ENCODE measurements at regions of chr19 and their contacts with region 1.

Region 1: DNA sequence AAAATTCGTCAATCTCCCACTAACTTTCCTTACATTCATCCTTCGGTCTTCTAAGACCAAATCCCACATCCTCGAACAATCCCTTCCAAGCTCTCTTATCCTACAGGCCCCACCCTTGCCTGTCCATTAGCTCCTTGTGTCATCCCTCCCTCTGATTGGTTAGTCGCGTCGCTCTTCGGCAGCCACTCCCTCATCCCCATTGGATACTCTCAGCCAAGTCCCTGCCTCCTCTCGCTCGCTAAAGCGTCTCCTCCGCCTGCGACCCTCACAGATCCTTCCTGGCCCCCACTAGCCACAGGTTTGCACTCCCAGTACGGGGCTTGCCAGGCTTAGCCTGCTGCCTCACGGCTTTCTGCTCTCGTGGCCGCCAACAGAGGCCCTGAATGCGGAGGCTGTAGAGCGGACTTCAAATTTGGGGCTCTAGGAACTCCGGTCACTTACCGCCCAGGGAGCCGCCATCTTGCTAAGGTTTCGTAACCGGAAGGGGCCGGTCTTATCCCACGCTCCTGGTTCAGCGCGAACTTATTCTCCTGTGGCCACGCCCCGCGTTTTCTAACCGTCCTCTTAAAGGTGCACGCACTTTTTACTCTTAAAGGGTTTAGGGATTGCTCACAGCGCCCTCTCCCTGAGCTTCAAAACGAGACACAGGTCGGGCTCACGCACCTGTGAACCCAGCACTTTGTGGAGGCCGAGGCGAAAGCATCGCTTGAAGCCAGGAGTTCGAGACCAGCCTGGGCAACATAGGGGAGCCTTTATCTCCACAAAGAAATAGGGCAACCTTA is at the start of gene DMAC2:
- DNase-seq: peak; percentile 87 to 97 (median 92)
- H3K4me3 ChIP-seq: peak within 1 kb of the TSS; percentile 80 to 93
- H3K4me3 Mint-ChIP-seq: peak within 1 kb of the TSS in 3 of 8 donors; percentile 5 to 80 (median 27)
- H3K27ac ChIP-seq: peak within 1 kb of the TSS; percentile 85
- H3K27ac Mint-ChIP-seq: peak within 1 kb of the TSS in 4 of 7 donors; percentile 22 to 60 (median 25)
- H3K4me1 ChIP-seq: peaks cover 19% of the 10 kb centered on the region
- H3K4me1 Mint-ChIP-seq: peaks cover 6 to 11% (median 10%) of the 10 kb centered on the region in 4 donors
- H3K27me3 ChIP-seq: no peaks in the 10 kb centered on the region
- H3K27me3 Mint-ChIP-seq: peaks cover 6 to 7% of the 10 kb centered on the region in 2 donors
- total RNA-seq, gene DMAC2: 27.7 to 28.9 TPM

Region 2: DNA sequence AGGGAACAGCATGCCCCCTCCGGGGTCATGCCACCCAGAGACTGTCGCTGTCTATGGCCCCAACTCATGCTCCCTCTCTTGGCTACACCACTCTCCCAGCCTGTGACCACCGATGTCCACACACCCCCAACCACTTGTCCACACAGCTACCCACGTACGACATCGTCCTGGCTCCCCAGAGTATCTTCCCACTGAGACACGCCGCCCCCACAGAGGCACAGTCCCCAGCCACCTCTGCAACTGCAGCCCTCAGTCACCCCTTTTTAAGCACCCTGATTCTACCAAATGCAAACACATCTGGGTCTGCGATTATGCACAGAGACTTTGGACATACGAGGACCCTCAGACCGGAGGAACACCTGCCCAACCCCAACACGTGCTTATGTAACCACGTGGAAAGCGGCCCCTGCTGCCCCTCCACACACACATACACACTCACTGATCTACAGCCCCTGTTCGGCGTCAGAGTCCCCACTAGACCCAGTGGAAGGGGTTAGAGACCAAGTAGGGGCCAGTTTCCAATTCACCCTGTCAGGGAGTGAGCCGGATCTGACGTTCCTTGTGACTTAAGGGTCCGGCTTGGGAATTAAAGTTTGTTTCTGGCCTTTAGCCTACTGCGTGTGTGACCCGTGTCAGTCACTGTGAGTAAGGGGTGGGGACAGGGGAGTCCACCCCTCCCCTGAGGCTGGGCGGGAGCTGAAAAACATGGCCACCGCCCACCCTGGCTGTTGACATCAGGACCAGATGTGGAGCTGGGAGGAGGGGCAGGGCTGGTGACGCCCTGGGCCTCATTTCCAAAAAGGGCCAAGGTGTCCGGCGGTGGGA is 232.5 kb before region 1 on chr19:
- CTCF ChIA-PET with region 1: no interaction called
- POLR2A ChIA-PET with region 1: no interaction called
- intact Hi-C with region 1: loop called (anchors 2 kb)
- DNase-seq: no peak
- H3K4me3 ChIP-seq: no peak overlapping the region
- H3K4me3 Mint-ChIP-seq: no peak overlapping the region
- H3K27ac ChIP-seq: no peak overlapping the region
- H3K27ac Mint-ChIP-seq: peak overlapping the region in 2 of 7 donors; percentile 76 to 78
- H3K4me1 ChIP-seq: no peaks in the 10 kb centered on the region
- H3K4me1 Mint-ChIP-seq: peaks cover 3 to 11% (median 9%) of the 10 kb centered on the region in 4 donors
- H3K27me3 ChIP-seq: no peaks in the 10 kb centered on the region
- H3K27me3 Mint-ChIP-seq: peaks cover 0 to 3% of the 10 kb centered on the region in 2 donors

Region 3: DNA sequence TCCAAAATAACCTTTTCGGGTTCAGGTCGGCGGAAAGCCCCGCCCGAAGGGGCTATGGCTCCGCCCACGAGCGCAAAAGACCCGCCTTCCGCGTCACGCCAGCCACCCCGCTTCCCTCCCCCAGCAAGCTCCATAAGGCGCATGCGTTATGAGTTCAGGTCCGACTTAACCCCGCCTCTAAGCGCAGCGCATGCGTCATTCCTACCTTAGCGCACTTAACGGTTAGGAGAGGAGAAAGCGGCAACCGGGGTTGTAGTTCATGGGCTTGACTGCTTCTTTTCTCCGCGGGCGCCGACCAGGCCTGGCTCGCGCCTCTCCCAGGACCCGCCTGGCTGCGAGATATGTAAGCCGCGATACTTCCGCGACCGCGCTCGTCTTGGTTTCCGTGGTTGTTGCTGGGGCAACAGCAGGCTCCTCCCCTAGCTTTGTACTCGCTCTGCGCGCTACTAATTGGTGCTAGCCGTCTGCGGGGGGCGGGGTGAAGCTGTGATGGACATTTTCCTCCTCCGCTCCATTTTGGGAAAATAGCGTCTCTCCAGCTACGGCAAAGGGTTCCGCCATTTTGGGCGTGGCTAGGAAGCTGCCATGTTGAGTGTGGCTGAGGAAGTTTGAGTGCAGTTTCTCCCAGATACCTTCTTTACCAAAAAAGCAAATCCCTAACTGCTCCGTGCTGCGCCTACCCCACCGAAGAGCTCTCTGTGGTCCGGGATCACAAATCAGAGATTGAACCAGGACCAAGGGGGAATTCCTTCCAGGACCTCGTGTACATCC is 75.7 kb before region 1 on chr19 and contains the start of gene B9D2:
- CTCF ChIA-PET with region 1: interaction called, 6 read pairs
- POLR2A ChIA-PET with region 1: interaction called, 17 read pairs
- intact Hi-C with region 1: no loop called
- DNase-seq: peak; percentile 98 to 99 (median 99)
- H3K4me3 ChIP-seq: peak within 1 kb of the TSS; percentile 77 to 91
- H3K4me3 Mint-ChIP-seq: peak within 1 kb of the TSS; percentile 93 to 98 (median 95)
- H3K27ac ChIP-seq: peak within 1 kb of the TSS; percentile 99
- H3K27ac Mint-ChIP-seq: peak within 1 kb of the TSS; percentile 97 to 100 (median 100)
- H3K4me1 ChIP-seq: peaks cover 24% of the 10 kb centered on the region
- H3K4me1 Mint-ChIP-seq: peaks cover 15 to 45% (median 23%) of the 10 kb centered on the region in 4 donors
- H3K27me3 ChIP-seq: no peaks in the 10 kb centered on the region
- H3K27me3 Mint-ChIP-seq: no peaks in the 10 kb centered on the region
- total RNA-seq, gene B9D2: 11.6 to 15.2 TPM

Region 4: DNA sequence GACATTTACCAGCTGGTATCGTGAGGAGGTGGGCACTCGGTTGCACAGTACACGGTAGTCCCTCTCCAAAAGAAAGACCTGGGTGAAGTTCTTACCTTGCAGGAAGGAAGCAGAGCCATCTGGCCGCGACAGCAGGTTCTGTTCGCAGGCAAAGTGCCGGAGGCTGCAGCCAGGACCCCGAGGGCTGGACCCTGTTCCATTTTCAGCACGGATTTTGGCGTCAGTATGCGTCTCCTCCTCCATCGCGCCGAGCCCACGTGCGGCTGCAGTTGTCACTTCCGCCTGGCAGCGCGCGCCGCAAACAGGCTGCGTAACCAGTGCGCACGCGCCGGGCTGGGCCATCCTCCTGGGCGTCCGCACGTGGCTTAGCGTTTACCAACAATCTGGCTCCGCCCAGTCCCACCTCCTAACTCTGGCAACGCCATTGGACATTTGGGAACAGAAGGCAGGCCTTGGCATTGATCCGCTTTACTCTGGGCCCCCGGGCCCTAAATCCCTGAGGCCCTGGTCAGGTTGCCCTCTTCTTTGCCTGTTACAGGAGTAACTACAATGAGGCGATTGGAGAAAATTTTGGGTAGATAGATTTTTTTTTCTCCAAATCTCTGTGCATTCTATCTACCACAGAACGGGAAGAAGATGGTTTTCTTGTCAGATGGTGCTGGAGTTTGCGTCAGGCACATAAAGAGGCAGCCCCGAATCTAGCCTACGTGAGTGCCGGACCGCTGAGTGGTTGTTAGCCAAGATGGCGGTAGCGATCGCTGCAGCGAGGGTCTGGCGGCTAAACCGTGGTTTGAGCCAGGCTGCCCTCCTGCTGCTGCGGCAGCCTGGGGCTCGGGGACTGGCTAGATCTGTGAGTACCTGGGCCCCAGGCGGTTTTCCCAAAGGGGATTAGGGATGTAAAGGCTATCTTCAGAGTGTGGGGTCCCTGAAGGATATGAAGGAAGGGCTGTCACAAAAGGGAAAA is 42.3 kb before region 1 on chr19 and contains the starts of genes BCKDHA and EXOSC5:
- CTCF ChIA-PET with region 1: no interaction called
- POLR2A ChIA-PET with region 1: no interaction called
- intact Hi-C with region 1: loop called (anchors 1 kb)
- DNase-seq: peak; percentile 98 to 100 (median 100)
- H3K4me3 ChIP-seq: peak within 1 kb of the TSS; percentile 94 to 96
- H3K4me3 Mint-ChIP-seq: peak within 1 kb of the TSS; percentile 94 to 100 (median 98)
- H3K27ac ChIP-seq: peak within 1 kb of the TSS; percentile 93
- H3K27ac Mint-ChIP-seq: peak within 1 kb of the TSS; percentile 98 to 100 (median 100)
- H3K4me1 ChIP-seq: peaks cover 31% of the 10 kb centered on the region
- H3K4me1 Mint-ChIP-seq: peaks cover 27 to 54% (median 41%) of the 10 kb centered on the region in 4 donors
- H3K27me3 ChIP-seq: no peaks in the 10 kb centered on the region
- H3K27me3 Mint-ChIP-seq: no peaks in the 10 kb centered on the region
- total RNA-seq, gene BCKDHA: 23.6 to 27.1 TPM
- total RNA-seq, gene EXOSC5: 18.2 to 23.0 TPM

Region 5: DNA sequence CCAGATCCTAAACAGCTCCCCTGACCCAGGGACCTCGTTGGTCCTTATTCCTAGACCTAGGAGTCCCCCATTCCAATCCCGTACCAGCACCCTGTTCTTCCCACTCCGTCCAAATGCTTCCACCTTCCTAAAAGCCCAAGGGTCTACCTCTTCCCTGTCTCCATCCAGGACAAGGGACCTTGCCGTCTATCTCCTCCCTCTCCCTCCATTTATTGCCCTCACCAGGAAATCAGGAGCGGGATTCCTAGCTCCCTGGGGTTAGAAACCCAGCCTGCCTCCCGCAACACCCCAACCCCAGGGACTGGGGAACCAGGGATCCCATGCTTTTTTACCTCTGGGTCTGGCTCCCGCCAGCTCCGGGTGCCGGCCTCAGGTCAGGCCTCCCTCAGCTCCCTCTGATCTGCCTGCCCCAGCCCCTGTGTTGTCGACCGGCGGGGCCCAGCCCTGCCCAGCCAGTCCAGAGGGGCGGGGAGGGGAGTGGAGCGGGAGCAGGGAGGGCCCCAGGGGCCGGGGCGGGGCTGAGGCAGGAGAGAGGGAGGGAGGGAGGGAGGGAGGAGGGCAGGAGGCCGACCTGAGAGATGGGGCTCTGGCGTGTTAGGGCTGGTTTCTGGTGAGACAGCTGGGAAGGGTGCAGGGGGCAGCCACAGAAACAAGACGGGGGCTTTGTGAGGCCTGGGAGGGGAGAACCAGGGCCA is 12.5 kb before region 1 on chr19 and contains the start of gene B3GNT8:
- CTCF ChIA-PET with region 1: interaction called, 8 read pairs
- POLR2A ChIA-PET with region 1: interaction called, 13 read pairs
- intact Hi-C with region 1: loop called (anchors 1 kb)
- DNase-seq: peak; percentile 16 to 52 (median 32)
- H3K4me3 ChIP-seq: peak within 1 kb of the TSS; percentile 33 to 34
- H3K4me3 Mint-ChIP-seq: peak within 1 kb of the TSS; percentile 90 to 98 (median 92)
- H3K27ac ChIP-seq: peak within 1 kb of the TSS; percentile 68
- H3K27ac Mint-ChIP-seq: peak within 1 kb of the TSS; percentile 91 to 98 (median 96)
- H3K4me1 ChIP-seq: peaks cover 39% of the 10 kb centered on the region
- H3K4me1 Mint-ChIP-seq: peaks cover 15 to 51% (median 34%) of the 10 kb centered on the region in 4 donors
- H3K27me3 ChIP-seq: no peaks in the 10 kb centered on the region
- H3K27me3 Mint-ChIP-seq: no peaks in the 10 kb centered on the region
- total RNA-seq, gene B3GNT8: 2.9 to 3.2 TPM

Region 6: GRCh38 chr19:41531438-41532311 is 92.0 kb after region 1 on chr19:
- CTCF ChIA-PET with region 1: no interaction called
- POLR2A ChIA-PET with region 1: interaction called, 11 read pairs
- intact Hi-C with region 1: no loop called
- DNase-seq: peak; percentile 80 to 93 (median 88)
- H3K4me3 ChIP-seq: peak overlapping the region; percentile 30 to 37
- H3K4me3 Mint-ChIP-seq: peak overlapping the region; percentile 77 to 88 (median 86)
- H3K27ac ChIP-seq: peak overlapping the region; percentile 53
- H3K27ac Mint-ChIP-seq: peak overlapping the region; percentile 82 to 98 (median 94)
- H3K4me1 ChIP-seq: peaks cover 53% of the 10 kb centered on the region
- H3K4me1 Mint-ChIP-seq: peaks cover 33 to 60% (median 49%) of the 10 kb centered on the region in 4 donors
- H3K27me3 ChIP-seq: no peaks in the 10 kb centered on the region
- H3K27me3 Mint-ChIP-seq: peaks cover 1 to 3% of the 10 kb centered on the region in 2 donors

Region 7: GRCh38 chr19:41706741-41707501 is 267.3 kb after region 1 on chr19:
- CTCF ChIA-PET with region 1: no interaction called
- POLR2A ChIA-PET with region 1: no interaction called
- intact Hi-C with region 1: no loop called
- DNase-seq: peak; percentile 68 to 80 (median 74)
- H3K4me3 ChIP-seq: peak overlapping the region; percentile 29 to 45
- H3K4me3 Mint-ChIP-seq: peak overlapping the region; percentile 63 to 85 (median 78)
- H3K27ac ChIP-seq: no peak overlapping the region
- H3K27ac Mint-ChIP-seq: no peak overlapping the region
- H3K4me1 ChIP-seq: no peaks in the 10 kb centered on the region
- H3K4me1 Mint-ChIP-seq: peaks cover 3 to 6% (median 6%) of the 10 kb centered on the region in 4 donors
- H3K27me3 ChIP-seq: peaks cover 5% of the 10 kb centered on the region
- H3K27me3 Mint-ChIP-seq: peaks cover 17 to 31% of the 10 kb centered on the region in 2 donors